RWPE1 (cell line): ENCODE measurements at regions of chr7 and their contacts with region 1.

Region 1: GRCh38 chr7:25851332-25852210 is 300.4 kb upstream of the NFE2L3 start:
- DNase-seq: peak; percentile 69
- H3K27ac ChIP-seq: no peak overlapping the region
- CTCF ChIP-seq: peak; percentile 89

Region 2: GRCh38 chr7:25565949-25566348 is 285.6 kb before region 1 on chr7:
- CTCF ChIA-PET with region 1: interaction called, 15 read pairs
- POLR2A ChIA-PET with region 1: no interaction called
- DNase-seq: peak; percentile 60
- H3K27ac ChIP-seq: no peak overlapping the region
- CTCF ChIP-seq: peak; percentile 100

Region 3: GRCh38 chr7:25720427-25720826 is 131.1 kb before region 1 on chr7:
- CTCF ChIA-PET with region 1: interaction called, 10 read pairs
- POLR2A ChIA-PET with region 1: no interaction called
- DNase-seq: peak; percentile 30
- H3K27ac ChIP-seq: no peak overlapping the region
- CTCF ChIP-seq: peak; percentile 28; the same call in 1 of the 2 replicates

Region 4: DNA sequence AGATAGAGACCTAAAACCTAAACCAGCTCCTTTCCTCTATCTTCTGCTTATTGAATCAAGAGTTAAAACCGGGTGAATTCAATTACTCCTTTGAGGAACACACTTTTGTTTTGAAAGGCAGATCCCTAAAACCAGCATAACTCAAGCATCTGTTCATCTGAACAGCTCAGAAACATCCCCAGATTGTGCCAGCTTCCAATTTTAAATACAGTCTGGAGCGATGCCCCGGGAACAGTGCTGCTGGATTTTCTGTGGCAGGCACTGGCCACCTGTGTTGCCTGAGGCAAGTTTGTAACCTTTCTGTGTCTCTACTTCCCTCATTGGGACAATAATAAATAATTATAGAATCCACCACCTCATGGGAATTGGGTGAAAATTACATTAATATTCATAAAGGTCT is 19.0 kb after region 1 on chr7:
- CTCF ChIA-PET with region 1: no interaction called
- POLR2A ChIA-PET with region 1: no interaction called
- DNase-seq: no peak
- H3K27ac ChIP-seq: no peak overlapping the region
- CTCF ChIP-seq: no peak

Region 5: GRCh38 chr7:26061688-26062150 is 210.1 kb after region 1 on chr7:
- CTCF ChIA-PET with region 1: interaction called, 11 read pairs
- POLR2A ChIA-PET with region 1: no interaction called
- DNase-seq: peak; percentile 85
- H3K27ac ChIP-seq: no peak overlapping the region
- CTCF ChIP-seq: peak; percentile 85